ENCODE measurements at regions of chr11 and their contacts with region 1.

Region 1: GRCh38 chr11:95705485-95706124 is 84.0 kb downstream of the FAM76B start:
- DNase-seq: peak; percentile 91
- H3K4me3 Mint-ChIP-seq: no peak overlapping the region
- H3K27ac Mint-ChIP-seq: no peak overlapping the region
- H3K4me1 Mint-ChIP-seq: peaks cover 13% of the 10 kb centered on the region
- H3K27me3 Mint-ChIP-seq: no peaks in the 10 kb centered on the region

Region 2: GRCh38 chr11:95067039-95067840 is 638.4 kb before region 1 on chr11:
- CTCF ChIA-PET with region 1: interaction called, 11 read pairs
- POLR2A ChIA-PET with region 1: no interaction called
- intact Hi-C with region 1: loop called (anchors 5 kb)
- DNase-seq: peak; percentile 85
- H3K4me3 Mint-ChIP-seq: peak overlapping the region; percentile 87
- H3K27ac Mint-ChIP-seq: peak overlapping the region; percentile 97
- H3K4me1 Mint-ChIP-seq: peaks cover 24% of the 10 kb centered on the region
- H3K27me3 Mint-ChIP-seq: no peaks in the 10 kb centered on the region

Region 3: DNA sequence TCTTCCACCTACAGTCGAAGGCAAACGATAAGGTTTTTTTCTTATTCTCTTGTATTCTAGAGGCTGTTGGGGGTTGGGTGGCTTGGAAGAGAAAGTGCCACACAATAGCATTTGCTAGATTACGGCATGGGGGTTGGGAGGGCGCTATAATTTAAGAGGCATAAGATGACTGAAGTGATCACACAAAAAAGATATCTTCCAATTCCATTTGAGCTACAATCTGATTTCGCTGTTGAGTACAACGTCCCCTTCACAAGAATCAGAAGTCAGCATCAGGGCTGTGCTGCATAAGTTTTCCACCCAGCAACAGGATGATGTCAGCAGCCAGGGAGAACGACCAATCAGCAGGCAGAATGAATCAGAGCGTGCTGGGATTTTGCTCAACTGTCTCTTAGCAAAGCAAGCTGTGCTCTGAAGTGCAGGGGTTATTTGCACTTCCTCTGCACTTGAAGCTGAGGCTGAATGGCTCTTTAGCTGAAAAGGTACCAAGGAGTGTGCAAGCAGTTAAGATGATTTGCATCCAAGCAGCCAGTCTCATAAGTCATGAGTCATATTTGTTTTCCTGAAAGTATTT is 451.4 kb before region 1 on chr11:
- CTCF ChIA-PET with region 1: interaction called, 17 read pairs
- POLR2A ChIA-PET with region 1: no interaction called
- intact Hi-C with region 1: no loop called
- DNase-seq: peak; percentile 91
- H3K4me3 Mint-ChIP-seq: peak overlapping the region; percentile 81
- H3K27ac Mint-ChIP-seq: peak overlapping the region; percentile 93
- H3K4me1 Mint-ChIP-seq: peaks cover 42% of the 10 kb centered on the region
- H3K27me3 Mint-ChIP-seq: no peaks in the 10 kb centered on the region

Region 4: GRCh38 chr11:95545116-95545875 is 160.3 kb before region 1 on chr11:
- CTCF ChIA-PET with region 1: interaction called, 12 read pairs
- POLR2A ChIA-PET with region 1: no interaction called
- intact Hi-C with region 1: no loop called
- DNase-seq: no peak
- H3K4me3 Mint-ChIP-seq: no peak overlapping the region
- H3K27ac Mint-ChIP-seq: no peak overlapping the region
- H3K4me1 Mint-ChIP-seq: peaks cover 20% of the 10 kb centered on the region
- H3K27me3 Mint-ChIP-seq: no peaks in the 10 kb centered on the region

Region 5: DNA sequence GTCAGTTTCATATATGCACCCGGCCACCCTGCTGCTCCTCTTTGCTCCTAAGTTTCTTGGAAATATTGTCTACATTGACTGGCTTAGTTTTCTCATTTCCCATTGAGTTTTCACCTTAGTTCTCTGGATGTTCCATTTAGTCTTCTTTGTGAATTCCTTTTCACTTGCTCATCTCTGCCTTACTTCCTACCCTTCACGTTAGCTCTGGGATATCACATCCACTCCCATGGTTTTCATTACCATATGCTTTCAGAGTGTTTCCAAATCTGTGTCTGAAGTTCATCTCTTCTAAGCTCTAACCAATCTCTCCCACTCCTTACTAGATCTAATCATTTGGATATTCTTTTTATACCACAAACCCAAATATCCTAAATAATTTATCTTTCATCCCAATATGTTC is 142.4 kb before region 1 on chr11:
- CTCF ChIA-PET with region 1: interaction called, 23 read pairs
- POLR2A ChIA-PET with region 1: no interaction called
- intact Hi-C with region 1: no loop called
- DNase-seq: no peak
- H3K4me3 Mint-ChIP-seq: no peak overlapping the region
- H3K27ac Mint-ChIP-seq: no peak overlapping the region
- H3K4me1 Mint-ChIP-seq: peaks cover 30% of the 10 kb centered on the region
- H3K27me3 Mint-ChIP-seq: no peaks in the 10 kb centered on the region

Region 6: DNA sequence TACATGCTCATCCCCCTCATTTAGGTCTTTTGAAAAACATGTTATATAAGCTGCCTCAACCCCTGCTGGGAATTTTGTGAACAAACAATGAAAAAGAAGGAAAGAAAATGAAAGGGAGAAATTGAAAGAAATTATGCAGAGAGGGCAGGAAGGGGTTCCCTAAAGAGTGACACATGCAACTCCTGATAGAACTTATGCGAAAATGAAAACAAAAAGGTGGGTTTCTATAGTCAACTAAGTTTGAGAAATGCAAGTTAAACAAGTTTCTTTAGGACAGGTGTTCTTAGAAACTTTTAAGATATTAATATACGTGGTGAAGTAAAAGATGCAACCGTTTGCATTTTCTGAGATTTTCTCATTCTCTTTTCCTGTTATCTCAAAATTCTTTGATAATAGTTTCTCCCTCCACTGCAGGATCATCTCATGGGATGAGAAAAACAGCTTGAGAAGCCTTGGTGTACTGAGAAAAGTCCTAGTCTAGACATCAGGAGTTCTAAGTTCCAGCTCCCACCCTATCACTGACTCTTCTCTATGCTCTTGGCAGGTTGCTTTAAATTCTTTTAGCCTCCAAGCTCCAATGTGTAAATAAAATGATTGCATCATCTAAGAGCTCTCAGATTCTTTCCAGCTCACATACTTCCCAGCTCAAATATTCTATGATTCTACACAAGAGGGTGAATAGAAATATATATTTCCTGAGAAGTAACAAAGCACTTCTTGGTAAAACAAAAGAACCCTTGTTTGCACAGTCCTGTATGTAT is 25.3 kb before region 1 on chr11:
- CTCF ChIA-PET with region 1: interaction called, 24 read pairs
- POLR2A ChIA-PET with region 1: no interaction called
- intact Hi-C with region 1: no loop called
- DNase-seq: no peak
- H3K4me3 Mint-ChIP-seq: peak overlapping the region; percentile 9
- H3K27ac Mint-ChIP-seq: peak overlapping the region; percentile 45
- H3K4me1 Mint-ChIP-seq: peaks cover 85% of the 10 kb centered on the region
- H3K27me3 Mint-ChIP-seq: no peaks in the 10 kb centered on the region

Region 7: GRCh38 chr11:95725196-95725595 is 19.6 kb after region 1 on chr11:
- CTCF ChIA-PET with region 1: interaction called, 17 read pairs
- POLR2A ChIA-PET with region 1: no interaction called
- intact Hi-C with region 1: no loop called
- DNase-seq: no peak
- H3K4me3 Mint-ChIP-seq: no peak overlapping the region
- H3K27ac Mint-ChIP-seq: no peak overlapping the region
- H3K4me1 Mint-ChIP-seq: peaks cover 4% of the 10 kb centered on the region
- H3K27me3 Mint-ChIP-seq: no peaks in the 10 kb centered on the region